Activated B cell treated with CpG ODN at 0.5 μM for 24 hours (primary cell): ENCODE measurements at regions of chr11 and their contacts with region 1.

Region 1: DNA sequence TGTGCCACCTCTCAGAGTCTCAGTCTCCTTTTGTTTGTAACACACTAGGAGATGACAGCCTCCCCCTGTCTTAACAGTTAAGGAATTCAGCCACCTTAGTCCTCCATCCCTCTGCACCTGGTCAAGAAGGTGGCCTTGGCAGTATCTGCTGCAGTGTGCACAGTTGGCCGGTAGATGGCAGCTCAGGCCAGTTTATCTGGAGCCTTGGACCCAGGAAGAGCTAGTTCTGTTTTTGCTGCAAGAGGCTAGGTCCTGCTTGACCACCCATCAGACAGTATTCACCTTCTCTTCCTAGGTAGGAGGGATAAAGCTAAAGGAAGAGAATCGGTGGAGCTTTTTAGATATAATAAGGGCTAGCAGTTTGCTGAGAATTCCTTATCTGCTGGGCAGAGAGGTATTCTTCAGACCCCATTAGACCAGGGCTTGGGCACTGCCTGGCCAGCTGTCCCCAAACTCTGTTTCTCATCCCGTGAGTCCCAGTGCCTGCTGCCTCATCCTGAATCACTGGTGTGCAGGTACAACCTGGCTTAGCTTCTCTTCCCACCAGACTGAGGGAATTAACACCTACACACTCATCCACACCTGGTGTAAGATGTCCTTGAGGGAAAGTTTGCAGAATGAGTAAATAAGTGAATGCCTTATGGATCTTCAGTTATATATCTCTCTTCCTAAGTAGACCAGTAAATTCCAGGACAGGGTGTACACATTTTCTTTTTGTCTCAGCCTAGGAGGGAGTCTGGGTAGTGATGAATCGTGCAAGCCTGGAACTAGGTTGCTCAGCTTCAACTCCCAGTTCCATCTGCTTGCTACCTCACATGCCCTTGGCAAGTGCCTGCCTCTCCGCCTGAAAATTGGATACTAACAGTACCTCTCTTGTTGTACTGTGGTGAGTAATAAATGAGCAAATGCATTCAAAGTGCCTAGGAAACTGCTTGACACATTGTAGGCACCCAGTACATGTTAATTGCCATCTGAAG is 70.8 kb upstream of the NARS2 start:
- DNase-seq: peak; percentile 52
- ATAC-seq: peak; percentile 74
- H3K4me3 Mint-ChIP-seq: no peak overlapping the region
- H3K27ac Mint-ChIP-seq: no peak overlapping the region
- H3K4me1 Mint-ChIP-seq: no peaks in the 10 kb centered on the region
- H3K27me3 Mint-ChIP-seq: peaks cover 8% of the 10 kb centered on the region
- CTCF ChIP-seq: peak; percentile 98

Region 2: GRCh38 chr11:78045851-78046485 is 599.5 kb before region 1 on chr11:
- CTCF ChIA-PET with region 1: no interaction called
- POLR2A ChIA-PET with region 1: no interaction called
- intact Hi-C with region 1: no loop called
- DNase-seq: peak; percentile 81
- ATAC-seq: peak; percentile 98
- H3K4me3 Mint-ChIP-seq: peak overlapping the region; percentile 72
- H3K27ac Mint-ChIP-seq: no peak overlapping the region
- H3K4me1 Mint-ChIP-seq: peaks cover 6% of the 10 kb centered on the region
- H3K27me3 Mint-ChIP-seq: peaks cover 5% of the 10 kb centered on the region
- CTCF ChIP-seq: peak; percentile 95

Region 3: DNA sequence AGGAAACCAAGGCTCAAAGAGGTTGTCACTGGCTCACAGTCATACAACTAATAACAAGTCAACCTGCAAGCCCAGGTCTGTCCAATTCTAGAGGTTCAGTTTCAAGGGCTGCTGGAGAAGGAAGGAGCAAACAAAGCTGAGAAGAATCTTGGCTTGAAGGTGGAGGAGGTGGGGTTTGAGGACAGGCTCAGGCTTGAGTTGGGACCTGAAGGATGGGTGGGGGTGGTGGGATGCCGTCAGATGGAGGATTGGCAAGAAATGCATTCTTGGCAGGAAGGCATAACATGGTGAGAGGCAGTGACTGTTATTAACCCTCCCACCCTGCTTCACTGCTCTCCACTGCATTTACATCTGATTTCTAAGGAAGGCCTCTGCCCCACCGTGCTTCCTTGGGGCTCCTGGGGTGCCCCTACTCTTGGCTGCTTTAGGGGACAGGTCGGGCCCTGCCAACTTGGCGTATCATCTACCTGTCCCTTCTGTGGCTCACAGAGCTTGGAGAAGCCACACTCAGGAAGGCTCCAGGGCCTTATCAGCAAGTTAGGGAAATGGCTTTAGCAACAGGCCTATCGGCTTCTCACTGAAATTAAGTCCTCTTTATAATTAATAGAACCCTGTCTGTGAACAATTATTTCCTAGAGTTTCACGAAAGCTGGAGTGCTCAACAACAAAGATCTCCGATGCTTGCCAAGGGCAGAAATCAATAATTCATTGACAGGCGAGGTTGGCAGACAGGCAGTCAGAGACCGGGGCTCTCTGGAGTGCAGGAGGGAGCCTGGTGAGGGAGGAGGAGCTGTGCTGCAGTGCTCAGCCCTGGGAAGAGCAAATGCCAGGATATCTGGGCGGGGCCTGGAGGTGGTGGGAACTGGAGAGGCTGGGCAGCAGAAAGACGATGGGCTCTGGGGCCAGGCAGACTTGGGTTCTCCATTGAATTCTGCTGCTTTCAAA is 14.1 kb after region 1 on chr11:
- CTCF ChIA-PET with region 1: interaction called, 16 read pairs
- POLR2A ChIA-PET with region 1: no interaction called
- intact Hi-C with region 1: no loop called
- DNase-seq: no peak
- ATAC-seq: no peak
- H3K4me3 Mint-ChIP-seq: no peak overlapping the region
- H3K27ac Mint-ChIP-seq: no peak overlapping the region
- H3K4me1 Mint-ChIP-seq: no peaks in the 10 kb centered on the region
- H3K27me3 Mint-ChIP-seq: peaks cover 3% of the 10 kb centered on the region
- CTCF ChIP-seq: no peak

Region 4: GRCh38 chr11:78715639-78716311 is 70.3 kb after region 1 on chr11:
- CTCF ChIA-PET with region 1: interaction called, 20 read pairs
- POLR2A ChIA-PET with region 1: no interaction called
- intact Hi-C with region 1: loop called (anchors 1 kb)
- DNase-seq: no peak
- ATAC-seq: no peak
- H3K4me3 Mint-ChIP-seq: no peak overlapping the region
- H3K27ac Mint-ChIP-seq: no peak overlapping the region
- H3K4me1 Mint-ChIP-seq: no peaks in the 10 kb centered on the region
- H3K27me3 Mint-ChIP-seq: peaks cover 4% of the 10 kb centered on the region
- CTCF ChIP-seq: no peak

Region 5: GRCh38 chr11:79100093-79100910 is 454.8 kb after region 1 on chr11:
- CTCF ChIA-PET with region 1: interaction called, 15 read pairs
- POLR2A ChIA-PET with region 1: no interaction called
- intact Hi-C with region 1: loop called (anchors 1 kb)
- DNase-seq: no peak
- ATAC-seq: peak; percentile 64
- H3K4me3 Mint-ChIP-seq: no peak overlapping the region
- H3K27ac Mint-ChIP-seq: no peak overlapping the region
- H3K4me1 Mint-ChIP-seq: no peaks in the 10 kb centered on the region
- H3K27me3 Mint-ChIP-seq: peaks cover 17% of the 10 kb centered on the region
- CTCF ChIP-seq: no peak